ENCODE measurements at regions of chr4 and their contacts with region 1.

Region 1: DNA sequence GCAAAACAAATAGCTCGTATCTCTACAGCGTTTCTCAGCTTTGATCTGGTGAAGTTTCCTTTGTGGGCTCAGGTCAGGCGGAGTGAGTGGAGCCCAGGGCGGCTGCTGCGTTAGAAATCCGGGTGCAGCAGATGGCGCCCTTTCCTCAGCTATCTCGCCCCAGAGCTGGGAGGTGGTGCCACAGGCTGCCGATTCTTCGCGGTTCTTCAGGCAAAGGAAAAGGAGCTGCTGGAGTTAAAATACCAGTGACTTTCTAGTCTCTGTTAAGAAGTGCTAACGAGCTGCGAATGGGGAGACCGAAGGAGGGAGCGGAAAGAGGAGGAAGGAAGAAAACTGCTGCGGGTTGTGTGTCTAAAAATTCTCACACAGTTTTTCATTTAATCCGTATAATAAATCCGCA is 114.6 kb downstream of the CPE start:
- DNase-seq: peak; percentile 84
- ATAC-seq: peak; percentile 96
- H3K4me3 Mint-ChIP-seq: no peak overlapping the region
- H3K27ac Mint-ChIP-seq: no peak overlapping the region
- H3K4me1 Mint-ChIP-seq: peaks cover 4% of the 10 kb centered on the region
- H3K27me3 Mint-ChIP-seq: peaks cover 23% of the 10 kb centered on the region

Region 2: DNA sequence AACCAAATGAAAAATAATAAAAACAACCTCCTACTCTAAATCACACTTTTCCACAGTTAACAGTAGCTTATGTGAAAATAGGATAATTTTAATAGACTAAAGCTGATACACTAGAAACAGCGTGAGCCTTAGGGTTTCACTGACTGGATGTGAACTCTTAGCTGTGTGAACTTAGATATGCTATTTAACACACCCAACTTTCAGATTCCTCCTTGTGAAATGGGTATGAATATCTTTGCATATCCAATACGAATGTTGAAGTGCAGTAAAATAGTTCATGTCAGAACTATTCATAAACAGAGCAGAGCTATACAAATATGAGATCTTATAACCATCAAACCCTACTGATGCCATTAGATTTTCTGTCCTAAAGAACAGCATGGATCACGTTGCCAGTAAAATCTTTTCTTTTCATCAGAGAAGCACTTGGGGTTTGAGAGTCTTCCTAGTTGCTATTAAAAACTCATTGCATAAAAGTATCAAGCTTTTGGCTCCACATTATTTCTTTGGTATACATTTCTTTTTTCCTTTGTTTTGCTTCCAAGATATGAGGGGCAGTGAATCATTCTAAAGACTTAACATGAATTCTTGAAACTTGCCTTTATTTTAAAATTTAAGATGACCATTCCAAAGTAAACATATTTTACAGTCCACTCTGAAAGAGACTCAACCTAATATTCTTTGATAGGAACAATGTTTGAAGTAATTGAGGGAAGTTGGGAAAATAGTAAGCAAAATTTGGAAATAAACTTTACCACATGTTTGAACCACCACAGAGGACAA is 12.1 kb before region 1 on chr4:
- CTCF ChIA-PET with region 1: interaction called, 13 read pairs
- POLR2A ChIA-PET with region 1: no interaction called
- intact Hi-C with region 1: no loop called
- DNase-seq: no peak
- ATAC-seq: no peak
- H3K4me3 Mint-ChIP-seq: no peak overlapping the region
- H3K27ac Mint-ChIP-seq: no peak overlapping the region
- H3K4me1 Mint-ChIP-seq: no peaks in the 10 kb centered on the region
- H3K27me3 Mint-ChIP-seq: peaks cover 10% of the 10 kb centered on the region

Region 3: DNA sequence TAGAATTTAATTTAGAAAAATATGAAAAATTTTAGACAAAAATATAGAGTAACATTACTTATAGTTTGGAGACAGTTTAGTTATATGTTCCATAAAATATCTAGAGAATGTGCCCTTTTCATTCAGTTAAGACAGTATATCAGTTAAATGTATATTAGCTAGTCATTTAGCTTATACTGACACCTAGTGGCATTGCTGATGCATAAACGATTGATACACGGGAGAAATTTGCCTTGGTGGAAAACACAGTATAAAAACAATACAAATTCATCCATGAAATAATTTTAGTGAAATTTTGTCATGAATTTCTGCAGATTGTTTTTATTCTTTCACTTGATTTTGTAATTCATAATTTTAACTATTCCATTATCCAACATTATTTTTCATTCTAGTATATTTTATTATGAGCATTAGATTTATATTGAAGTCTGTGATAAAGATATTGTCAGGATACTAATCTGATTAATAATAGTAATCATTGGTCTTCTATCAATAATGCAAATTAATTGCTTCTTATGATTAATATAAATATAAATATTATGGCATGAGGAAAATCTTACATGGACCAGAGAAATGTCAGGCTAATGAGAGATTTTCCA is 598.7 kb after region 1 on chr4:
- CTCF ChIA-PET with region 1: interaction called, 26 read pairs
- POLR2A ChIA-PET with region 1: no interaction called
- intact Hi-C with region 1: loop called (anchors 1 kb)
- DNase-seq: no peak
- ATAC-seq: no peak
- H3K4me3 Mint-ChIP-seq: no peak overlapping the region
- H3K27ac Mint-ChIP-seq: no peak overlapping the region
- H3K4me1 Mint-ChIP-seq: no peaks in the 10 kb centered on the region
- H3K27me3 Mint-ChIP-seq: no peaks in the 10 kb centered on the region

Region 4: DNA sequence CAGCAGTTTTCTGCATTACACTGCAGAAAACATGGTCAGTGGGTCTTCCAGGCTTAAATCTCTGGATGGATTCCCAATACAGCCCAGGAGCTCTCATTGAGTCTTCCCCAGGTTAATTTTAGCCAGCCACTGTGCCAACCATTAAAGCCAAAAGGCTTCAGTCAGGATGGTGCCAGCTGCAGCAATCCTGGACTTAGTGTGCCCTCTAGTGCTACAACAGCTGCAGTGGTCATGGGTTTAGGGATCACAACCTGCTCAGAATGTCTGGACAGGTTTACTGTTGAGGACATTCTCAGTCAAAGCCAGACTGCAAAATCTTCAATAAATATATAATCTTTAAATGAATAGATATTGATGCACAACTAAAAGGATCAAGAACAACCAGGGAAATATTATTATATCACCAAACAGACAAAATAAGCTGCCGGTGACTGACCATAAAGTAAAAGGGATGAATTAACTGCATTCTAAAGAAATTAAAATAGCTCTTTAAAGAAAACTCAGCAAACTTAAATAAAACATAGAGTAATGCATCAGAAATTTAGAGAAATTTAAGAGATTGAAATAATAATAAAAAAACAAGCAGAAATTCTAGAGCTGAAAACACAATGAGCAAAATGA is 1101.1 kb after region 1 on chr4:
- CTCF ChIA-PET with region 1: no interaction called
- POLR2A ChIA-PET with region 1: no interaction called
- intact Hi-C with region 1: loop called in 1 of 2 experiments (anchors 10 kb)
- DNase-seq: peak; percentile 7
- ATAC-seq: no peak
- H3K4me3 Mint-ChIP-seq: no peak overlapping the region
- H3K27ac Mint-ChIP-seq: no peak overlapping the region
- H3K4me1 Mint-ChIP-seq: no peaks in the 10 kb centered on the region
- H3K27me3 Mint-ChIP-seq: no peaks in the 10 kb centered on the region